Caco-2 (cell line): ENCODE measurements at regions of chr4 and their contacts with region 1.

Region 1: DNA sequence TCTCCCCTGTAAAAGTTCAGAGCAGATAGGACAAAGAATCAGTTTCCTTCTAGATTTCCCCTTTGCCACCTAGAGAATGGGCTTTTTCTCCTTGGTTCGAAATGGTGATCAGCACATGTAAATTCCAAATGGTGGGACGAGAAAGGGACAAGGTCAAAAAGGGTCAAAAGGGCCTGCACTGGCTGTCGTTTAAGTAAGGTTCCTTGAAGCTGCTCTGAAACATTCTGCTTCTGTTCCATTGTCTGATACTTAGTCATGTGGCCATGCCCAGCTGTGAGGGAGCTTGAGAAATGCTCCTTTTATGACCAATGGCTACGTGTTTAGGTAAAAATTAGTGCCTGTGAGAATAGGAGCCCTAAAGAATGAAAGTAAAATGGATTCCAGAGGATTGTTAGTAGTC is 165.9 kb upstream of the CENPE start:
- DNase-seq: no peak
- H3K4me3 ChIP-seq: no peak overlapping the region
- H3K4me3 Mint-ChIP-seq: no peak overlapping the region
- H3K27ac Mint-ChIP-seq: no peak overlapping the region
- H3K4me1 ChIP-seq: peaks cover 16% of the 10 kb centered on the region
- H3K4me1 Mint-ChIP-seq: peaks cover 14% of the 10 kb centered on the region
- H3K27me3 ChIP-seq: no peaks in the 10 kb centered on the region
- H3K27me3 Mint-ChIP-seq: no peaks in the 10 kb centered on the region
- CTCF ChIP-seq: no peak

Region 2: DNA sequence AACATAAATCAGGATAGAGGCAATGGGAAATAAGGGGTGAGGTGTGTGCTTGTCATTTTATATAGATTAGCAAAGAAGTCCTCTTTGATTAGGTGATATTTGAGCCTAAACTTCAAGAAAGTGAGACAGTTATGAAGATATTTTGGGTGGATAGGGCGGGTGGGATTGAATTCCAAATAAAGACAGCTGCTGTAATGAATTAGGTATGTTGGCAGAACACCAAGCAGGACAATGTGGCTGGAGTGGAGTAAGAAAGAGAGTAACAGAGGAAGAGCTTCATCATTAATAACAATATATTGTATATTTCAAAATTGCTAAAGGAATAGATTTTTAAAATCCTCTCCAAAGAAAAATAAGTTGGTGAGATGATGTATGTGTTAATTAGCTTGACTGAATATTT is 74.9 kb before region 1 on chr4:
- CTCF ChIA-PET with region 1: no interaction called
- POLR2A ChIA-PET with region 1: no interaction called
- intact Hi-C with region 1: no loop called
- DNase-seq: no peak
- H3K4me3 ChIP-seq: no peak overlapping the region
- H3K4me3 Mint-ChIP-seq: no peak overlapping the region
- H3K27ac Mint-ChIP-seq: no peak overlapping the region
- H3K4me1 ChIP-seq: peaks cover 3% of the 10 kb centered on the region
- H3K4me1 Mint-ChIP-seq: peaks cover 13% of the 10 kb centered on the region
- H3K27me3 ChIP-seq: no peaks in the 10 kb centered on the region
- H3K27me3 Mint-ChIP-seq: no peaks in the 10 kb centered on the region
- CTCF ChIP-seq: no peak

Region 3: GRCh38 chr4:103318327-103318726 is 45.8 kb before region 1 on chr4:
- CTCF ChIA-PET with region 1: no interaction called
- POLR2A ChIA-PET with region 1: no interaction called
- intact Hi-C with region 1: no loop called
- DNase-seq: no peak
- H3K4me3 ChIP-seq: no peak overlapping the region
- H3K4me3 Mint-ChIP-seq: no peak overlapping the region
- H3K27ac Mint-ChIP-seq: no peak overlapping the region
- H3K4me1 ChIP-seq: no peaks in the 10 kb centered on the region
- H3K4me1 Mint-ChIP-seq: no peaks in the 10 kb centered on the region
- H3K27me3 ChIP-seq: no peaks in the 10 kb centered on the region
- H3K27me3 Mint-ChIP-seq: no peaks in the 10 kb centered on the region
- CTCF ChIP-seq: no peak

Region 4: GRCh38 chr4:103429283-103429682 is 65.2 kb after region 1 on chr4:
- CTCF ChIA-PET with region 1: no interaction called
- POLR2A ChIA-PET with region 1: no interaction called
- intact Hi-C with region 1: loop called (anchors 1 kb)
- DNase-seq: peak in 1 of 2 experiments; percentile 11
- H3K4me3 ChIP-seq: no peak overlapping the region
- H3K4me3 Mint-ChIP-seq: no peak overlapping the region
- H3K27ac Mint-ChIP-seq: no peak overlapping the region
- H3K4me1 ChIP-seq: peaks cover 22% of the 10 kb centered on the region
- H3K4me1 Mint-ChIP-seq: peaks cover 11% of the 10 kb centered on the region
- H3K27me3 ChIP-seq: no peaks in the 10 kb centered on the region
- H3K27me3 Mint-ChIP-seq: no peaks in the 10 kb centered on the region
- CTCF ChIP-seq: no peak

Region 5: DNA sequence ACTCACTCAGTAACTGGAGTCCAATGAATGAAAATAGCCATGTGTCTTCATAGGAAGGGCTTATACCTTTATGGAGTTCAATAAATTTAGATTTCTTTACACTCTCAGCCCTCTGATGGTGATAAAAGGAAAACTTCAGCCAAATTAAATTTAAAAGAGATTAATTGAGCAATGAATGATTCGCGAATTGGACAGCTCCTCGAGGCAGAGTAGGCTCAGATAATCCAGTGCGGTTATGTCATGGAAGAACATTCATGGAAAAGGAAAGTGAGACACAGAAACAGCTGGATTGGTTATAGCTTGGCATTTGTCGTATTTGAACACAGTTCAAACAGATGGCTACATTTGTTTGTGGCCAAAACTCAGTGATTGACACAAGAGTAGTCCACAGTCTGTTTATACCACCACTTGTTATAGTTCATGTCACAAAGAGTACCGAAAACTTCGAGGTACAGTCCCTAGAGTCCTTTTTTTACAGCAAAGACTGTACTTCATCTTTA is 410.3 kb after region 1 on chr4:
- CTCF ChIA-PET with region 1: no interaction called
- POLR2A ChIA-PET with region 1: no interaction called
- intact Hi-C with region 1: no loop called
- DNase-seq: no peak
- H3K4me3 ChIP-seq: no peak overlapping the region
- H3K4me3 Mint-ChIP-seq: no peak overlapping the region
- H3K27ac Mint-ChIP-seq: no peak overlapping the region
- H3K4me1 ChIP-seq: no peaks in the 10 kb centered on the region
- H3K4me1 Mint-ChIP-seq: no peaks in the 10 kb centered on the region
- H3K27me3 ChIP-seq: no peaks in the 10 kb centered on the region
- H3K27me3 Mint-ChIP-seq: no peaks in the 10 kb centered on the region
- CTCF ChIP-seq: no peak